ENCODE measurements at regions of chr5 and their contacts with region 1.

Region 1: DNA sequence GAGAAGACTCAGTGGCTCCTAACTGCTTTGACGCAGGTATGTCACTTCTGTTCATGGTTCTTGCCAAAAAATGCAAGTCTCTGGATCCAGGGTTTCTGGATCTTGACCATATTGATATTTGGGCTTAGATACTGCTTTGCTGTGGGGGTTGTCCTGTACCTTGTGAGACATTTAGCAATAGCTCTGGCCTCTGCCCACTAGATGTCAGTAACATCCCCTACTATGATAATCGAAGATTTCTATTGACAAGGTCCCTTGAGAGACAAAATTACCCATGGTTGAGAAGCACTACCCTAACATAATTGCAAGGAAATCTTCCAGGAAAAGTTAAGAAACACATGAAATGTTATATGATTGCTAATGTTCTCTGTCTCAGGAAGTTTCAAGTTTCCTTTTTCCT is 285.4 kb downstream of the TMEM232 start:
- DNase-seq: peak; percentile 37
- ATAC-seq: peak; percentile 83
- H3K4me3 ChIP-seq: no peak overlapping the region
- H3K27ac ChIP-seq: no peak overlapping the region
- H3K4me1 ChIP-seq: no peaks in the 10 kb centered on the region
- H3K27me3 ChIP-seq: no peaks in the 10 kb centered on the region
- CTCF ChIP-seq: peak; percentile 60
- EP300 ChIP-seq: no peak
- POLR2A ChIP-seq: no peak
- RAD21 ChIP-seq: peak; percentile 48; the same call in 1 of the 2 replicates

Region 2: DNA sequence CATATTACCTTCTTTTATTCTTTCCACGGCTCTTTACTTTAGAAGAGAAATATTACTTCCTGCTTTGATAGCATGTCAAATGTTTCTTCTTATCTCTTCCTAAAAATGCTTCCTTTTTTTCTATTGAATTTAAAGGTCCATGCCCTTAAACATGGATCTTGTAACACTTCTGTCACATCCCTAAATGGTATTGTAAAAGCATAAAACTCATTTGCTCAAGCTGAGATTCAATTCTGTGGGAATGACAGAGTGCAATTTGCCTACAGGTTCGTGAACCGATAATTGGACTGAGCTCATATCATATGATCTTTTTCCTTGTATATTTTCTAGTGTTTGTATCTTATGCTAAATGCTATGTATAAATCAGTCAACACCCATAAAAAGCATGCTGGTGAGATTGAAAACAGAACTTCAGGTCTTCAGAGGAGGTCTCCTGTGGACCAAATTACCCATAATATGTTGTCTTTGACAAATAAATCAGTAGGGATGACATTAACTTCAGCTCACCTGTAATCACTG is 143.8 kb before region 1 on chr5:
- CTCF ChIA-PET with region 1: no interaction called
- POLR2A ChIA-PET with region 1: no interaction called
- in situ Hi-C with region 1: no loop called
- intact Hi-C with region 1: no loop called
- DNase-seq: no peak
- ATAC-seq: no peak
- H3K4me3 ChIP-seq: no peak overlapping the region
- H3K27ac ChIP-seq: no peak overlapping the region
- H3K4me1 ChIP-seq: no peaks in the 10 kb centered on the region
- H3K27me3 ChIP-seq: no peaks in the 10 kb centered on the region
- CTCF ChIP-seq: no peak
- EP300 ChIP-seq: no peak
- POLR2A ChIP-seq: no peak
- RAD21 ChIP-seq: no peak

Region 3: DNA sequence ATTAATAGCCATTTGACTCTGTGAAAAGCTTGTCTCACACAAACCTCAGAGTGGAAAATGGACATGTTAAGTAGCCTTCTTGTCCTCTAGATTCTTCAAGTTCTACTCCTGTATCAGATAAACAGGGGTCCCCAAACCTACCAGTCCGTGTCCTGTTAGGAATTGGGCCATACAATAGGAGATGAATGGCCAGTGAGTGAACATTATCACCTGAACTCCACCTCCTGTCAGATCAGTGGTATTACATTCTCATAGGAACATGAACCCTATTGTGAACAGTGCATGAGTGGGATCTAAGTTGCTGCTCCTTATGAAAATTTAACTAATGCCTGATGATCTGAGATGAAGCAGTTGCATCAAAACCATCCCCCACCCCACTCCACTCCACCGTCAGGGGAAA is 149.2 kb after region 1 on chr5:
- CTCF ChIA-PET with region 1: interaction called, 12 read pairs
- POLR2A ChIA-PET with region 1: no interaction called
- in situ Hi-C with region 1: no loop called
- intact Hi-C with region 1: loop called (anchors 1 kb)
- DNase-seq: peak; percentile 14
- ATAC-seq: peak; percentile 91
- H3K4me3 ChIP-seq: no peak overlapping the region
- H3K27ac ChIP-seq: no peak overlapping the region
- H3K4me1 ChIP-seq: no peaks in the 10 kb centered on the region
- H3K27me3 ChIP-seq: no peaks in the 10 kb centered on the region
- CTCF ChIP-seq: peak; percentile 71
- EP300 ChIP-seq: no peak
- POLR2A ChIP-seq: no peak
- RAD21 ChIP-seq: peak; percentile 38; the same call in 1 of the 2 replicates

Region 4: DNA sequence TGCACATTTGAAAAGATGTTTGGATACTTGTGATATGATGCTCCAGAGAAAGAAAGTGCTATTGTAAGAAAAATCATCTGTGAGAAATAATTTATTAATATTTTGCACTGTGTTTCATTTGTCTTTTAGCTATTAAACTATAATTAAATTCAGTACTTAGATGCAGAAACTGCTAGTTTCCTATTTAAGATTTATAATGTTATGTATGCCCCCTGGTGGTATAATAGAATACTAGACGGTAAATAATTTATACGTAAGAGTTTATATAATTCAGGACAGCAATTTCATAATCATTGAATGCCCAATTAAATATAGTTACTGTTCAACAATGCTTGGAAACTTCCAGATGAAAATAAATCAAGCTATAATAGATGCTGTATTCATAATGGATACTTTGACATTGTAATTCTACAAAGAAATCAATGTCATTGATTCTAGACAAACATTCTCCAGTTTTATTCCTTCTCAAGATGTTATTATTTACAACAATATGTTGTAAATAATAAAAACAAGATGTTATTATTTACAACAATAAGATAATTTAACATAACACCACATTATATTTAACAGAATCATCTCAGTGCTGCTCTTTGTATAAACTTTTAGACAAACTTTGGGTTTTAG is 184.5 kb after region 1 on chr5:
- CTCF ChIA-PET with region 1: interaction called, 4 read pairs
- POLR2A ChIA-PET with region 1: no interaction called
- in situ Hi-C with region 1: no loop called
- intact Hi-C with region 1: loop called (anchors 1 kb)
- DNase-seq: peak; percentile 9
- ATAC-seq: no peak
- H3K4me3 ChIP-seq: no peak overlapping the region
- H3K27ac ChIP-seq: no peak overlapping the region
- H3K4me1 ChIP-seq: no peaks in the 10 kb centered on the region
- H3K27me3 ChIP-seq: no peaks in the 10 kb centered on the region
- CTCF ChIP-seq: no peak
- EP300 ChIP-seq: no peak
- POLR2A ChIP-seq: no peak
- RAD21 ChIP-seq: no peak

Region 5: GRCh38 chr5:110865400-110866094 is 424.5 kb after region 1 on chr5:
- CTCF ChIA-PET with region 1: no interaction called
- POLR2A ChIA-PET with region 1: no interaction called
- in situ Hi-C with region 1: no loop called
- intact Hi-C with region 1: loop called (anchors 2 kb)
- DNase-seq: peak; percentile 28
- ATAC-seq: peak; percentile 94
- H3K4me3 ChIP-seq: no peak overlapping the region
- H3K27ac ChIP-seq: no peak overlapping the region
- H3K4me1 ChIP-seq: no peaks in the 10 kb centered on the region
- H3K27me3 ChIP-seq: no peaks in the 10 kb centered on the region
- CTCF ChIP-seq: peak; percentile 69
- EP300 ChIP-seq: no peak
- POLR2A ChIP-seq: no peak
- RAD21 ChIP-seq: no peak

Measured in HepG2 (cell line).